ENCODE measurements at regions of chr3 and their contacts with region 1.

Region 1: DNA sequence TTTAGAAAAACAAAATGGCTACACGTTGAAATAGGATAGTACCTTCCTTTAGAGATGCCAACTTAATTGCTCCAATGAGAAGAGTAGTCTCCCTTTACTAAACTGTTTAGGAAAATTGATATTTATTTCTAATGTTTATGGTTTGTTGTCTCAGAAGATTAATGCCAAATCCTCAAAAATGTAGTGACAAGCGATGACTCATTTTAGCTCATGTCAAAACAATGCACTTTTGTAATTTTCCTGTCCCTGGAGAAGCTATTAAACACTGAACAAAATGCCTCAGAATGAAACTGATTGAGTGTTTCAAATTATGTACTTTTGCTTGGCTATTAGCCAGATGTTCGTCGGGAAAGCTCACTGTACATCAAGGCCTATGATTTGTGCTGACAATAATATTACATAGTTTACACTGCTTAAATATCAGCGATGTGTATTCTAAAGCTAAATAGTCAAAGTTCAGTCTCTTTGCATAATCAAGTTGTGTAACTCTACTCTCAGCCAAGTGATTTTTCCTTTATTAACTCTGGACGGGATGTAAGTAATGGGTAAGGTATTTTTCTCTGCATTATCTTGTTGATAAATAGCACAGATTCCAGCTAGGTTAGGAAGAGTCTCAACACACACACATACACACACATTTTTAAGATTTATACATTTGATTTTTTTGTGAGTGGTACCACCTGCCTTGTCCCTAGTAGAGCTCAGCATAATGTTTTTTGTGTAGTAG is 83.7 kb downstream of the CMSS1 start:
- DNase-seq: peak; percentile 55 to 99
- H3K4me3 ChIP-seq: peak overlapping the region; percentile 30; the same call in 1 of the 2 replicates
- H3K27ac ChIP-seq: peak overlapping the region; percentile 93
- H3K4me1 ChIP-seq: peaks cover 58% of the 10 kb centered on the region
- H3K27me3 ChIP-seq: no peaks in the 10 kb centered on the region
- CTCF ChIP-seq: no peak

Region 2: GRCh38 chr3:99875929-99876841 is 25.2 kb before region 1 on chr3:
- CTCF ChIA-PET with region 1: no interaction called
- POLR2A ChIA-PET with region 1: no interaction called
- intact Hi-C with region 1: loop called (anchors 2 kb)
- DNase-seq: peak; percentile 76 to 86
- H3K4me3 ChIP-seq: peak overlapping the region; percentile 65
- H3K27ac ChIP-seq: peak overlapping the region; percentile 60
- H3K4me1 ChIP-seq: peaks cover 65% of the 10 kb centered on the region
- H3K27me3 ChIP-seq: no peaks in the 10 kb centered on the region
- CTCF ChIP-seq: no peak

Region 3: DNA sequence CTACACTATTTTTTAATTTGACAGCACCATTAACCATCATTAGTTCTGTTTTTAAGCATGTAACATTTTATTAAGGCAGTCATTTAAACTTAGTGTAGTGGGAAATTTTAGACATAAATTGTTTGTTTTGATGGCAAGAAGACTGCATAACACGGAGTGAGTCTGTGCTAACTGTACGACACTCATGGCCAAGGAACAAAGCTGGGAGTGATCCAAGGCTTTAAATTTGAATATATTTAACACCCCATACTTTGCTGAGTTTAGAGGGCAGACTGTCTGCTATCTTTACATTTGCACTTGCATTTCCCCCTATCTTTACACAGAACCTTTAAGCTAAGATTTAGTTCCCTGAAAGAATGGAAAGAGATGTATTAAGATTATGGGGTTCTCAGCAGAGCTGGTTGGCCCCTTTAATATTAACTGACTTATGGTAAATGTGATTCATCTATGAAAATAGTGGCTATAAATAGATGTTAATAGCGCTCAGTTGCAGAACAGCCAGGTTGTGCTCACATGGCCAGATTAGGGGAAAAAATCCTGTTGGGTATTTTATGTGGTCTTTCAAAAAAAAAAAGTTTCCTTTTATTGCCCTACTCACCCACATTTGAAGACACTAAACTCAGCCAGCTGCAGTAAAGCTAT is 37.0 kb after region 1 on chr3:
- CTCF ChIA-PET with region 1: no interaction called
- POLR2A ChIA-PET with region 1: no interaction called
- intact Hi-C with region 1: no loop called
- DNase-seq: no peak
- H3K4me3 ChIP-seq: no peak overlapping the region
- H3K27ac ChIP-seq: no peak overlapping the region
- H3K4me1 ChIP-seq: peaks cover 20% of the 10 kb centered on the region
- H3K27me3 ChIP-seq: no peaks in the 10 kb centered on the region
- CTCF ChIP-seq: no peak

Region 4: DNA sequence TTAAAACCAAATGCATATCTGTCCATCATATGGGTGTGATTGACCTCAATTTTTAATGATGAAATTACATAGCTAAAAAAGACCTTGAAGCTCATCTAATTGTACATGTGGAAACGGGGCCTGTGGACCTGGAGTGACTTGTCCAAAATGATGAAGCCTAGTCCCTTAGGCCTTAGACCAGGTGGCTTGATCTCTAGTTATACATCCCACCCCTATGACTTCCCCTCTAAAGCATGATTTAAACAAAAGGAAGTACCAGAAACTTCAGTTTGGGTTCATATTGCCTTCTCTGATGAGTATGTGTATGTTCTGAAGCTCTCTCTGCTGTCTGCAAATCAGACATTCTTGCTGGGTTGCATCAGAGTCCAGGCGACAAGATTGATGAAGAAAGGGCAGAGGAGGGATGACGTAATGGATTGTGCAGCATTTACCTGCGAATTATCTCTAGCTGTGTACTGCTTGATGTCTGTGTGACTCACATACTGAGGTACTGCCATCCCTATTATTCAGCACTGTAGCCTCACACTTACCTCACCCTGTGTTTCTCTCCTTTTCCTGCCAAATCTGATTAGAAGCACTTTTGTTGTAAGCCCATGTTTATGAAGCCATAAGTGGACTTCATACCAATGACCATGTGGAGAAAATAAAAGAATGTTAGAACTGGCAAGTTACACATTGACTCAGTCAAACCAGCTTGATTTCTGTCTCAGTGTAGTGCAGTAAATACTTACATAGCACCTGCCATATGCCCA is 101.4 kb after region 1 on chr3:
- CTCF ChIA-PET with region 1: interaction called, 4 read pairs
- POLR2A ChIA-PET with region 1: interaction called, 7 read pairs
- intact Hi-C with region 1: loop called (anchors 2 kb)
- DNase-seq: peak; percentile 79 to 100
- H3K4me3 ChIP-seq: no peak overlapping the region
- H3K27ac ChIP-seq: peak overlapping the region; percentile 60
- H3K4me1 ChIP-seq: peaks cover 57% of the 10 kb centered on the region
- H3K27me3 ChIP-seq: no peaks in the 10 kb centered on the region
- CTCF ChIP-seq: no peak

Region 5: DNA sequence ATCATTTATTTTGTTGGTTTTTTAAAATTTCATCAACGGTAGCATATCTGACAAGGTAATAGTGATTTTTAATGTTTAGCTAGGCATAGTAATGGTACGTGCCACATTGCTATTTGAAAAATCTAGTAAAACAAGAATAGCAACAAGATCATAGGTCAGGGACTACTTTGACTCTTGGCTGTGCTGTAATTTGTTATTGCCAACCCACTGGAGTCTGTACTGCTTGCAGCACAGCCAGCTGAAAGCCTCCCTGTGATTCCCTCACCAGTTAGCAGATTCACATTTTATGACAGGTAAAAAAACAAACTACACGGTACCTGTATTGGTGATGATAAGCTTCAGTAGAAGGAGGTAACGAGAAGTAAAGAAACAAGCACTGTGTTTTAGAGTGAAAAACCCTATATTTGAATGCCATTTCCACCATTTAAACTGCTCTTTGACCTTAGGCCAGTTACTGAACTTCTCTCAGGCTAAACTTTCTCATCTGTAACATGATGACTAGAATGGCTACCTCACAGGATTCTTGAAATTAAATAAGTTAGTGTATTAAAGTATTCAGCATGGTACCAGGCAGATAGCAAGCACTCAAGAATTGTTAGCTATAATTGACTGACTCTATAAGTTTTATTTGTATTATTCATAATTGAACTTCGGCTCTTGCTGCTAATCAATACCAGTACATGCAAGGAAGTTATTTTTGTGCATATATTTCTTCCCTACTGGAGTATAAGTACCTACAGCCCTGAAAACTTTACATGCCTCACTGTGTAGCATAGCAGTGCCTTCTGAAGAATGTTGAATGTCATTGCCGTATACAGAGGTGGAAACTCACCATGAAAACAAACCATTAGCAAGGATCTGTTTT is 196.8 kb after region 1 on chr3:
- CTCF ChIA-PET with region 1: no interaction called
- POLR2A ChIA-PET with region 1: no interaction called
- intact Hi-C with region 1: loop called (anchors 5 kb)
- DNase-seq: peak; percentile 49 to 96
- H3K4me3 ChIP-seq: peak overlapping the region; percentile 6; the same call in 1 of the 2 replicates
- H3K27ac ChIP-seq: peak overlapping the region; percentile 40
- H3K4me1 ChIP-seq: peaks cover 46% of the 10 kb centered on the region
- H3K27me3 ChIP-seq: no peaks in the 10 kb centered on the region
- CTCF ChIP-seq: no peak